Activated CD8-positive, alpha-beta T cell treated with anti-CD3 and anti-CD28 coated beads for 36 hours (primary cell): ENCODE measurements at regions of chr3 and their contacts with region 1.

Region 1: GRCh38 chr3:193816590-193817311 is 223.7 kb downstream of the OPA1 start:
- DNase-seq: no peak
- ATAC-seq: no peak
- H3K4me3 Mint-ChIP-seq: no peak overlapping the region
- H3K27ac Mint-ChIP-seq: no peak overlapping the region
- H3K4me1 Mint-ChIP-seq: no peaks in the 10 kb centered on the region
- H3K27me3 Mint-ChIP-seq: peaks cover 2% of the 10 kb centered on the region
- CTCF ChIP-seq: no peak

Region 2: DNA sequence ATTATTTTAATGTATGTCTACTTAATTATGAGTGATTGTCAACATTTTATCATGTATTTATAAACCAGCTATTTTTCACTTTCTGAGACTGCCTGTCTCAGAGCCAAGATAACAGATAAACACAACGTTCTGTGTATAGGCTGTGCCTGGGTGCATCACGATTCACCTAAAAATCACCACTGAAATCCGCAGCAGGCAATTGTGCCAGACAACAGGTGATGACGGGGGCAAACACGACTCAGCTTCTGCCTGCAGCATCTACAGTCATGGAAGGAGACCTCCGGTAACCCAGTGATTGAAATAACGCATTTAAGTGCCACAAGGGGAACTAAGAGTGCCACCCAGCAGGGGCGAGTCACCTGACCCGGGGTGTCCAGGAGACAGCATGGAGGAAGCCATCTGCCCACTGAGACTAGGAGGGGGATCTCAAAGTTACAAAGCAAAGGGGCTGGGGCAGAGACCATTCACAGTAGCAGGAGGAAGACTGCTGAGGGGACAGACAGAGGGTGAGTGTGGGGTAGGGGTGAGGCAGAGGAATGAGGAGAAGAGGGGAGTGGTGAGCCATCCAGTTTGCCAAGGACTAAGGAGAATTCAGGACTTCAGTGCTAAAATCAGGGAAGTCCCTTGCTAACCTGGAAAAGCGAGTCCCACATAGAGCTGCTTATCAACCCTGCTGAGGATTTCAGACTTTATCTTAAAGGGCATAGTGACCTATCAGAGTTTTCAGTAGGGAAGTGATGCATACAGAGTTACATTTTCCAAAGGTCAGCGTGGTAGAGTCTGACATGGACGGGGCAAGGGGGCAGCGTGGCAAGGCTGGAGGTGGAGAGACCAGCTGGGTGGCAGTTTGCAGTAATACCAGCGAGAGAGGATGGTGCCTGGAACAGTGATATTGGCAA is 62.5 kb after region 1 on chr3:
- CTCF ChIA-PET with region 1: no interaction called
- POLR2A ChIA-PET with region 1: no interaction called
- intact Hi-C with region 1: loop called (anchors 5 kb)
- DNase-seq: no peak
- ATAC-seq: peak; percentile 17
- H3K4me3 Mint-ChIP-seq: no peak overlapping the region
- H3K27ac Mint-ChIP-seq: no peak overlapping the region
- H3K4me1 Mint-ChIP-seq: no peaks in the 10 kb centered on the region
- H3K27me3 Mint-ChIP-seq: peaks cover 3% of the 10 kb centered on the region
- CTCF ChIP-seq: no peak